ENCODE measurements at regions of chr12 and their contacts with region 1.

Region 1: DNA sequence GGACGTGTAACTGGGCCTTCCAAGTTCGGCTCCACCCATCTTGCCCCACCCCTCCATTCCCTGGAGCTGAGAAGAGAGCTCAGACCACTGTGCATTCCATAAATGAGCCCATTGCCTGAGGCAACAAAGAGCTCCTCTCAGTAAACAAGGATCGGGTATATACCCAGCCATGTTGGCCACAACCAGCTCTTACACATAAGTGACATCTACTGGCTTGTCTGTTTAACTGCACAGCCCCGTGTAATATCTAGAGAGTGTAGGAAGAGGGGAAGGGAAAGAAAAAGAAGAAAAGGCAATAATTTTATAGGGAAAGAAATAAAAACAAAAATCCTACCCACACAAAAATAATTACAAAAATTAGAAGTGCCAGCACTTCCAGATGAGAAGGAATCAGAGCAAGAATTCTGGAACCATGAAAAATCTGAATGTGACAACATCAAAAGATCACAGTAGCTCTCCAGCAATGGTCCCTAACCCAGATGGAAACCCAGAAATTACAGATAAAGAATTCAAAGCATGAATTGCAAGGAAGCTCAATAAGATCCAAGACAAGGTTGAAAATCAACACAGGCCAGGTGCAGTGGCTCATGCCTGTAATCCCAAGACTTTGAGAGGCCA is 308.1 kb downstream of the RPAP3 start:
- DNase-seq: peak in 1 of 3 donors; percentile 52
- ATAC-seq: peak; percentile 96 to 99 (median 98)
- H3K4me3 ChIP-seq: no peak overlapping the region
- H3K27ac ChIP-seq: peak overlapping the region in 1 of 3 donors; percentile 37
- H3K4me1 ChIP-seq: peaks cover 0 to 7% (median 0%) of the 10 kb centered on the region in 4 donors
- H3K27me3 ChIP-seq: no peaks in the 10 kb centered on the region
- CTCF ChIP-seq: peak; percentile 69 to 80 (median 70)
- POLR2A ChIP-seq: no peak

Region 2: DNA sequence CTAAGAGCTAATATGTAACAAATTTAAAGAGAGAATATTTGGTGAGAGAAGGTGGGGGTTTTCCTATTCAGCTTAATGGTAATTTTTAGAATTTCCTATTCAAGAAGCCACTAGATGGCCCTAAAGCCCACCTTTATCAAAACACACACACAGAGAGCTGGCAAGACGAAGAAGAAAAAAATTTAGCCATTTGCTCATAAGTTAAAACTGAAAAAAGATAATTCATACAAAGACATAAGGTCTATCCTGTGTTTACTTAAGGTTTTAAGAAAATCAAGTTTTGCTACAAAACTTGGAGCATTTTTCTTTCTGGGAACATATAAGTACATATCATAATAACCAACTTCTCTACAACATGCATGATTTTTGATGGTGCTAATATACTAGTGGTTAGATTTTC is 365.1 kb before region 1 on chr12:
- intact Hi-C with region 1: loop called in 1 of 2 experiments (anchors 10 kb)
- DNase-seq: no peak
- ATAC-seq: peak; percentile 77 to 85 (median 84)
- H3K4me3 ChIP-seq: no peak overlapping the region
- H3K27ac ChIP-seq: peak overlapping the region; percentile 6 to 29 (median 17)
- H3K4me1 ChIP-seq: peaks cover 0 to 13% (median 4%) of the 10 kb centered on the region in 4 donors
- H3K27me3 ChIP-seq: no peaks in the 10 kb centered on the region
- CTCF ChIP-seq: peak; percentile 44 to 76 (median 61)
- POLR2A ChIP-seq: no peak

Region 3: GRCh38 chr12:48110691-48111315 is 713.0 kb after region 1 on chr12:
- intact Hi-C with region 1: no loop called
- DNase-seq: no peak
- ATAC-seq: no peak
- H3K4me3 ChIP-seq: no peak overlapping the region
- H3K27ac ChIP-seq: no peak overlapping the region
- H3K4me1 ChIP-seq: peaks cover 0 to 7% (median 3%) of the 10 kb centered on the region in 4 donors
- H3K27me3 ChIP-seq: no peaks in the 10 kb centered on the region
- CTCF ChIP-seq: no peak
- POLR2A ChIP-seq: no peak